Activated CD4-positive, alpha-beta memory T cell treated with anti-CD3 and anti-CD28 coated beads for 36 hours (primary cell): ENCODE measurements at regions of chr19 and their contacts with region 1.

Region 1: DNA sequence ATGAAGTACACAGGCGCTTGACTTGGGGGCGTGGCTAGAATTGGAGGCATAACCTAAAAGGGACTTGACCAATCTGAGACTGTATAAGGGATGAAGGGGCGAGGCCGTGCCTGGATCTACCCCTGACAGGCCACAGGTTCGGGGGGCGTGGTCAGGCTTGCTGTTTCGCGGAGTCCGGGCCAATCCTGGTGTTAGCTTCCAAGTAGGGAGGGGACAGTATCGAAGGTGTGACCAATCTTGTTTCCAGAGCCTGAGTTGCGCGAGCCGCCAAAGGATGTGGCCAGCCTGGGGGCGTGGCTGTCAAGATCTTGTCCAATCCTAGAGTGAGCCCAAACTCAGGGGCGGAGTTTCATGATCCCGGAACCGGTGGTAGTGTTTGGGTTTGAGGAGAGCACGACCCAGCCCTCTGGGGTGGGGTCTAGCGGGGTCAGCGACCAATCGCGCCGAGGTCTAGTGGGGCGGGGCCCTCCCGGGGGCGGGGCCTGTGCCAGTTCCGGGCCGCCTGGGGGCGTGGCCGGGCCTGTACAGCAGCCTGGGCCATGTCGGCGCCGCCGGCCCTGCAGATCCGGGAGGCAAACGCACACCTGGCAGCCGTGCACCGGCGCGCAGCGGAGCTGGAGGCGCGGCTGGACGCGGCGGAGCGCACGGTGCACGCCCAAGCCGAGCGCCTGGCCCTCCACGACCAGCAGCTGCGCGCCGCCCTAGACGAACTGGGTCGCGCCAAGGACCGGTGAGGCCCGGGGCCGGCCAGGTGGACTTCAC is at the start of gene VMAC:
- DNase-seq: peak; percentile 100
- H3K4me3 Mint-ChIP-seq: peak within 1 kb of the TSS; percentile 97
- H3K27ac Mint-ChIP-seq: peak within 1 kb of the TSS; percentile 98
- H3K4me1 Mint-ChIP-seq: peaks cover 38% of the 10 kb centered on the region
- H3K27me3 Mint-ChIP-seq: no peaks in the 10 kb centered on the region
- total RNA-seq, gene VMAC: 2.9 to 3.3 TPM

Region 2: DNA sequence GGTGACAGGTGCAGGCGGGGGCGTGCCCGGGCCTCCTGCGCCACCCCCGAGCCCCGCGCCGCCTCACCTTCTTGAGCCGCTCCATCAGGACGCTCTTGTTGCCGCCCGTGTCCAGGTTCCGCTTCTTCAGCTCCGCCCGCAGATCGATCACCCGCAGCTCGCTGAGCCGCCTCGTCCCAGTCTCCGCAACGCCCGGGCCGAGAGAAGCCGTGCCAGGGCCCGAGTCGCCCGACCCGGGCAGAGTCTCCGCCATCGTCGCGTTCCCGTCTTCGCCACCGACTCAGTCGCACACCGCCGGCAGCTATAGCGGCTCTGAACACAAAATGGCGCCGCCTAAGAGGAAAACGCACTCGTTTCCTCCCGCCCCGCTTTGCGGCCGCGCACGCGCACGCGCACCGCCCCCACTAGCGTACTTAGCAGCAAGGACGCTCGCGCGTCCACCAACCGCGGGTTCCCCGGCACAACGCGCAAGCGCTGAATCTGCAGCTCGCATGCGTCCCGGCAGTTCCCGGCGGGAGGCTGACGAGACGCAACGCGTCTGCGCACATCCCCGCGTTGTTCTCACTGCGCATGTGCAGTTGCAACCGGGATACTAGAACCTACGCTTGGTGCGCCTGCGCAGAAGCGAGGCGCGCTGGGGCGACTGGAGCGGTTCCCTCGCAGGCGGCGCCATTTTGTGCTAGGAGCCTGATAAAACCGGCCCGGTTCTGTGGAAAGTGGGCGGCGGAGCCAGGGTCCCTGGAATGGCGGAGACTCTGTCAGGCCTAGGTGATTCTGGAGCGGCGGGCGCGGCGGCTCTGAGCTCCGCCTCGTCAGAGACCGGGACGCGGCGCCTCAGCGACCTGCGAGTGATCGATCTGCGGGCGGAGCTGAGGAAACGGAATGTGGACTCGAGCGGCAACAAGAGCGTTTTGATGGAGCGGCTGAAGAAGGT is 281.8 kb before region 1 on chr19 and contains the starts of genes SAFB and SAFB2:
- CTCF ChIA-PET with region 1: no interaction called
- POLR2A ChIA-PET with region 1: interaction called, 9 read pairs
- intact Hi-C with region 1: loop called (anchors 1 kb)
- DNase-seq: peak; percentile 100
- H3K4me3 Mint-ChIP-seq: peak within 1 kb of the TSS; percentile 100
- H3K27ac Mint-ChIP-seq: peak within 1 kb of the TSS; percentile 100
- H3K4me1 Mint-ChIP-seq: peaks cover 67% of the 10 kb centered on the region
- H3K27me3 Mint-ChIP-seq: peaks cover 3% of the 10 kb centered on the region
- total RNA-seq, gene SAFB: 103 to 113 TPM
- total RNA-seq, gene SAFB2: 63.5 to 76.4 TPM

Region 3: DNA sequence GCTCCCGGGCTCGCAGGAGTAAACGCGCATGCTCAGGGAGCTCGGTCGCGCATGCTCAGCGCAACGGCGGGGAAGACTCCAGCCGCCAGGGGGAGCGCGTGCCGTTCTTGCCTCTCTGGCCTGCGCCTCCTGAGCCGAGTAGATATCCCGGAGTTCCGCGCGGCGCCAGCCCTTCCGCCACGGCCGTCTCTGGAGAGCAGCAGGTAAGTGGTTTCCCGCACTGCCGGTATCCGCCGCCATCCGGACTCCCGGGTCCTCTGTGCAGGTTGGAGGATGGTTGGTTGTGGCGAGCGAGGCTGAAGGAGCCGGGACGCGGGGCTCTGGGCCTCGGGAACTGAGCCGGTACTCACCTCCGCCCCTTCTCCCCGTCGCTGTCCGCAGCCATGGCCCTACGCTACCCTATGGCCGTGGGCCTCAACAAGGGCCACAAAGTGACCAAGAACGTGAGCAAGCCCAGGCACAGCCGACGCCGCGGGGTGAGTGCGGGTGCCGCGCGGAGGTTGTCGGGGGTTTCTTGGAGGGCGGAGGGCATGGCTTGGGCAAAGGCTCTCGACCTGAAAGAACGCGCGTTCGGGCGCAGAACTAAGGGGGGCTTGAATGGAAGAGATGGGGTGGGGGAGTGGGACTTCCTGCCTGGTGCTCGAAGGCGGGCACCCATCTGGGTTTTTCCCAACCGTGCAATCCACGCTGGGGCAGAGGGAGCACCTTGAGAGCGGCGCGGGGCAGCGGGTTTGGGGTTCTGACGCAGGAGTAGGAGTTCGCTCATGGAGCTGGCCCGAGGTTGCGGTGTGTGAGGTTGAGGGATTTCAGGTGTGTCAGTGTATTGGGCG is 214.2 kb before region 1 on chr19 and contains the start of gene RPL36:
- CTCF ChIA-PET with region 1: interaction called, 4 read pairs
- POLR2A ChIA-PET with region 1: interaction called, 5 read pairs
- intact Hi-C with region 1: loop called (anchors 1 kb)
- DNase-seq: peak; percentile 99
- H3K4me3 Mint-ChIP-seq: peak within 1 kb of the TSS; percentile 96
- H3K27ac Mint-ChIP-seq: peak within 1 kb of the TSS; percentile 95
- H3K4me1 Mint-ChIP-seq: peaks cover 31% of the 10 kb centered on the region
- H3K27me3 Mint-ChIP-seq: no peaks in the 10 kb centered on the region
- total RNA-seq, gene RPL36: 1,487 to 1,524 TPM

Region 4: GRCh38 chr19:5790573-5791520 is 113.7 kb before region 1 on chr19 and contains the start of gene DUS3L:
- CTCF ChIA-PET with region 1: interaction called, 4 read pairs
- POLR2A ChIA-PET with region 1: interaction called, 4 read pairs
- intact Hi-C with region 1: loop called (anchors 1 kb)
- DNase-seq: peak; percentile 98
- H3K4me3 Mint-ChIP-seq: peak within 1 kb of the TSS; percentile 100
- H3K27ac Mint-ChIP-seq: peak within 1 kb of the TSS; percentile 100
- H3K4me1 Mint-ChIP-seq: peaks cover 12% of the 10 kb centered on the region
- H3K27me3 Mint-ChIP-seq: no peaks in the 10 kb centered on the region
- total RNA-seq, gene DUS3L: 41.9 to 44.4 TPM

Region 5: DNA sequence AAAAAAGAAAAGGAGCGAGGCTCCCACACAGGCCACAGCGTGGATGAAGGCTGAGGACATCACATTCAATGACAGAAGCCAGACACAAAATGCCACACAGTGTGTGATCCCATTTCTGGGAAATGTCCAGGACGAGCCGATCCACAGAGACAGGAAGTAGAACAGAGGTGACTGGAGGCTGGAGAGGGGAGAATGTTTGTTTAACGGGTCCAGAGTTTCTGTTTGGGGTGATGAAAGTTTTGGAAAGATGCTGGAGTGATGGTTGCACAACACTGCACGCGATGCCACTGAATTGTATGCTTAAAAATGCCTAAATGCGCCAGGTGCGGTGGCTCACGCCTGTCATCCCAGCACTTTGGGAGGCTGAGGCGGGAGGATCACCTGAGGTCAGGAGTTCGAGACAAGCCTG is 33.5 kb before region 1 on chr19:
- CTCF ChIA-PET with region 1: no interaction called
- POLR2A ChIA-PET with region 1: no interaction called
- intact Hi-C with region 1: no loop called
- DNase-seq: no peak
- H3K4me3 Mint-ChIP-seq: no peak overlapping the region
- H3K27ac Mint-ChIP-seq: no peak overlapping the region
- H3K4me1 Mint-ChIP-seq: no peaks in the 10 kb centered on the region
- H3K27me3 Mint-ChIP-seq: no peaks in the 10 kb centered on the region

Region 6: GRCh38 chr19:5926641-5927440 is 22.3 kb after region 1 on chr19:
- CTCF ChIA-PET with region 1: no interaction called
- POLR2A ChIA-PET with region 1: no interaction called
- intact Hi-C with region 1: no loop called
- DNase-seq: no peak
- H3K4me3 Mint-ChIP-seq: no peak overlapping the region
- H3K27ac Mint-ChIP-seq: no peak overlapping the region
- H3K4me1 Mint-ChIP-seq: no peaks in the 10 kb centered on the region
- H3K27me3 Mint-ChIP-seq: no peaks in the 10 kb centered on the region

Region 7: GRCh38 chr19:5953680-5954213 is 49.2 kb after region 1 on chr19:
- CTCF ChIA-PET with region 1: no interaction called
- POLR2A ChIA-PET with region 1: interaction called, 7 read pairs
- intact Hi-C with region 1: loop called (anchors 2 kb)
- DNase-seq: peak; percentile 64
- H3K4me3 Mint-ChIP-seq: peak overlapping the region; percentile 64
- H3K27ac Mint-ChIP-seq: peak overlapping the region; percentile 95
- H3K4me1 Mint-ChIP-seq: peaks cover 91% of the 10 kb centered on the region
- H3K27me3 Mint-ChIP-seq: no peaks in the 10 kb centered on the region

Region 8: DNA sequence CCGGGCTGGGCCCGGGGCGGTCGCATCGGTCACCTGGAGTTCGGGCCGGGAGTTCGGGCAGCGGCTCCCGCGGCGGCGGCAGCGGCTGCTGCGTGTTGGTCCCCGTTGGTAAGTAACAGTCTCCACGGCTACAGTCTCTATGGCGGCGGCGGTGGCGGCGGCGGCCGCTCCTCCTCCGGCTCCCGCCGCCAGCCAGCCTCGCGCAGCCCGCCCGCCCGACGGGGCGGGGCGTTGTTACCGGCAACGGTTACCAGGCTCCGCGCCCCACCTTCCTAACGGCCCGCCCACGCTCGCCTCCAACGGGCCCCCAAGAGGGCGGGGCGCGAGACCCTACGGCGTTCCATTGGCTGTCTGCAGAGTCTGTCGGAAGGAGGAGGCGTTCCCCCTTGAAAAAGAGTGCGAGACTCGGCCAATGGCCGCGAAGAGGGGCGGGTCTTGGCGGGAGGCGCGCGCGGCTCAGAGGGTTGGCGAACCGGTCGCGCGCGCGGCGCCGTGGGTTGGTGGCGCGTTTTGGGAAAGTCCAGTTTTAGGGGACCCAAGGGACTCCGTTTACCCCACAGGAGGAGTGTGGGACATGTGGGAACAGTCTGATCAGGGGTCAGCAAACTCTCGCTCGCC is 205.9 kb after region 1 on chr19 and contains the start of gene RFX2:
- CTCF ChIA-PET with region 1: no interaction called
- POLR2A ChIA-PET with region 1: no interaction called
- intact Hi-C with region 1: loop called (anchors 5 kb)
- DNase-seq: peak; percentile 99
- H3K4me3 Mint-ChIP-seq: peak within 1 kb of the TSS; percentile 80
- H3K27ac Mint-ChIP-seq: peak within 1 kb of the TSS; percentile 74
- H3K4me1 Mint-ChIP-seq: peaks cover 19% of the 10 kb centered on the region
- H3K27me3 Mint-ChIP-seq: peaks cover 12% of the 10 kb centered on the region
- total RNA-seq, gene RFX2: 6.5 to 7.9 TPM

Region 9: GRCh38 chr19:6372594-6373095 is 468.1 kb after region 1 on chr19 and contains the start of gene ALKBH7:
- CTCF ChIA-PET with region 1: no interaction called
- POLR2A ChIA-PET with region 1: no interaction called
- intact Hi-C with region 1: loop called (anchors 1 kb)
- DNase-seq: peak; percentile 98
- H3K4me3 Mint-ChIP-seq: peak within 1 kb of the TSS; percentile 80
- H3K27ac Mint-ChIP-seq: peak within 1 kb of the TSS; percentile 88
- H3K4me1 Mint-ChIP-seq: peaks cover 11% of the 10 kb centered on the region
- H3K27me3 Mint-ChIP-seq: no peaks in the 10 kb centered on the region
- total RNA-seq, gene ALKBH7: 57.6 to 58.5 TPM